ENCODE measurements at regions of chr11 and their contacts with region 1.

Region 1: DNA sequence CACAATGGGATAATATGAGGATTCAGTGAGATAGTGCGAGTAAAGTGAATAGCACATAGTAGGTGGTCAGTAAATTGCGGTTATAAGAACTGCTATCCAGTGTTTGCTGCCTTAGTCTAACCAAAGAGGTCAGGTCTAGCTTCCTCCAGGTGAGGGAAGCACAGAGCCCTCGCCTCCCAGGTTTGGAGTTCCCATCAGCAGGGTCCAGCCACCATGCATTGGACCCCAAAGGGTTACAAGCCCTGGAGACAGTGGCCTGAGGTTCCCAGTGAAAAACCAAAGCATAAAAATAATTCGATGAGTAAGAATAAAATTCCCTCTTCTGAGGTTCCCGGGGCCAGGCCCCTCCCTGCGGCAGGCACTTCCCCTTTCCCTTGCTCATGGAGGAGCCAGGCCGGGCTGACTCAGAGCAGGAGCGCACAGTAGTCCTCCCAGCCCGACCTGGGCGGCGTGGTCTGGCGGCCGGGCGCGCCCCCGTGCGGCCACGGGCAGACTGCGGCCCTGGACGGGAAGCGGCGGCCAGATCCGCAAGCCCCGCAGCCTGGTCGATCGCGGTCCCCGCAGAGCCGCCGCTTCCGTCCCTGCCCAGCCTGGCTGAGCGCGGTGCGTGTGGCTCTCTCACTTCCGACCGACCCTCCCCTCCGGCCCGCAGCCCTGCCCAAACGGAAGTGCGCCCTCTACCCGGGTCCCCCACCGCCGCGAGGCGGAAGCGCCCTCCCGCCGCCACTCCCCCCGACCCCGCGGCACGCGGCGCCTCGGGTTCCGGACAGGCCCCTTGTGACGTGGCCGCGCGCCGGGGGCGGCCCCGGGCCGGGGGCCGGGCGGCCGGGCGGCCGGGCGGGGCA is at the start of gene SLC39A13:
- DNase-seq: peak; percentile 91
- H3K4me3 Mint-ChIP-seq: peak within 1 kb of the TSS; percentile 92
- H3K27ac Mint-ChIP-seq: peak within 1 kb of the TSS; percentile 92
- H3K4me1 Mint-ChIP-seq: peaks cover 25% of the 10 kb centered on the region
- H3K27me3 Mint-ChIP-seq: no peaks in the 10 kb centered on the region
- total RNA-seq, gene SLC39A13: 9.2 TPM

Region 2: GRCh38 chr11:46936138-46937110 is 471.5 kb before region 1 on chr11 and contains the start of gene CSTPP1:
- CTCF ChIA-PET with region 1: no interaction called
- intact Hi-C with region 1: loop called (anchors 5 kb)
- DNase-seq: peak; percentile 97
- H3K4me3 Mint-ChIP-seq: peak within 1 kb of the TSS; percentile 98
- H3K27ac Mint-ChIP-seq: peak within 1 kb of the TSS; percentile 88
- H3K4me1 Mint-ChIP-seq: peaks cover 18% of the 10 kb centered on the region
- H3K27me3 Mint-ChIP-seq: no peaks in the 10 kb centered on the region
- total RNA-seq, gene CSTPP1: 14.0 TPM

Region 3: DNA sequence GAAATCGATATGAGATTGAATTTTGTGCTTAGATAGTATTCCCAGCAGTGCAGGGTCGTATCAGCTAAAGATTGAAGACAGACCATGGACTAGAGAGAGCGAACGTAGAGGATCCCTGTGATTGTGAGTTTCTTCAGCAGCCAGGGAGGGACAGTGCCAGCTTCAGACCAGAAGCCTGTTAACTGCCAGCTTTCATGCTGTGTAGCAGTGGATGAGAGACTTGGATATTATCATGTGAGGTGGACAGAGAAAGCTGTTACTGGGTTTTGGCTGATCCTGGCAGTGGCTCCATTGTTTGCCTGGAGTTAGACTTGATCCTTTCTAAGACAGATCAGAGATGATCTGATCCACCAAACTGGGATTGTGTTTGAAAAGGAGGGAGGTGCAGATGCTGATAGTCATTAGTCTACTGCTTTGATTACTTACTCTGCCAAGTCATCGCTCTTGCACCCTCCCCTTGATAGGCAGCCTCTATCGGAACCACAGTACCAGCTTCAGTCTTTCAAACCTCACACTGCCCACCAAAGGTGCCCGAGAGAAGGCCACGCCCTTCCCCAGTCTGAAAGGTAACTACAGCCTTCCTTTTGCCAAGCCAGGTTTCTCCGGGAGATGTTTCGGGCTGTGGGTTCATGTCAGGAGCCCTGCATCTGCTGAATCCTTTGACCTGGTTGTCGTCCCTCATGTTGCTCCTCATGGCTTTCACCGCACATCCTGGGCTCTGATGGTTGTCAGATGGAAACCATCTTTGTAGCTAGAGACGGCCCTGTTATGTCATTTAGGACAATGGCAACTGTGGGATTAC is 121.8 kb before region 1 on chr11:
- CTCF ChIA-PET with region 1: no interaction called
- intact Hi-C with region 1: no loop called
- DNase-seq: no peak
- H3K4me3 Mint-ChIP-seq: no peak overlapping the region
- H3K27ac Mint-ChIP-seq: no peak overlapping the region
- H3K4me1 Mint-ChIP-seq: no peaks in the 10 kb centered on the region
- H3K27me3 Mint-ChIP-seq: no peaks in the 10 kb centered on the region

Region 4: GRCh38 chr11:47394322-47395222 is 13.4 kb before region 1 on chr11:
- CTCF ChIA-PET with region 1: interaction called, 5 read pairs
- intact Hi-C with region 1: loop called (anchors 1 kb)
- DNase-seq: peak; percentile 75
- H3K4me3 Mint-ChIP-seq: peak overlapping the region; percentile 56
- H3K27ac Mint-ChIP-seq: peak overlapping the region; percentile 88
- H3K4me1 Mint-ChIP-seq: peaks cover 37% of the 10 kb centered on the region
- H3K27me3 Mint-ChIP-seq: no peaks in the 10 kb centered on the region

Region 5: DNA sequence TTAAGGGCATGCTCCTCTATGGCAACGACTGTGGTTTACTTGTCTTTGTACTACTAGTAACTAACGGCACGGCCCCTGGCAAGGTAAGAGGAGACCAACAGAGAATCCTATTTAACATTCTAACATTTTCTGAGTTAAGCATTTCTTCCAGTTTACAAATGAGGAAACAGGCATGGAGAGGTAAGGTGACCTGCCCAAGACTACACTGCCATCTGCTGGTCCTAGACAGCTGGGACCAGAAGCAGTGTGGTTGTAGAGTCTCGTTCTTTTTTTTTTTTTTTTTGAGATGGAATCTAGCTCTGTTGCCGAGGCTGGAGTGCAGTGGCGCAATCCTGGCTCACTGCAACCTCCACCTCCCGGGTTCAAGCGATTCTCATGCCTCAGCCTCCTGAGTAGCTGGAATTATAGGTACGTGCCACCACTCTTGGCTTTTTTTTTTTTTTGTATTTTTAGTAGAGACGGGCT is 46.2 kb after region 1 on chr11:
- CTCF ChIA-PET with region 1: no interaction called
- intact Hi-C with region 1: loop called (anchors 2 kb)
- DNase-seq: peak; percentile 85
- H3K4me3 Mint-ChIP-seq: no peak overlapping the region
- H3K27ac Mint-ChIP-seq: no peak overlapping the region
- H3K4me1 Mint-ChIP-seq: peaks cover 2% of the 10 kb centered on the region
- H3K27me3 Mint-ChIP-seq: no peaks in the 10 kb centered on the region

Region 6: DNA sequence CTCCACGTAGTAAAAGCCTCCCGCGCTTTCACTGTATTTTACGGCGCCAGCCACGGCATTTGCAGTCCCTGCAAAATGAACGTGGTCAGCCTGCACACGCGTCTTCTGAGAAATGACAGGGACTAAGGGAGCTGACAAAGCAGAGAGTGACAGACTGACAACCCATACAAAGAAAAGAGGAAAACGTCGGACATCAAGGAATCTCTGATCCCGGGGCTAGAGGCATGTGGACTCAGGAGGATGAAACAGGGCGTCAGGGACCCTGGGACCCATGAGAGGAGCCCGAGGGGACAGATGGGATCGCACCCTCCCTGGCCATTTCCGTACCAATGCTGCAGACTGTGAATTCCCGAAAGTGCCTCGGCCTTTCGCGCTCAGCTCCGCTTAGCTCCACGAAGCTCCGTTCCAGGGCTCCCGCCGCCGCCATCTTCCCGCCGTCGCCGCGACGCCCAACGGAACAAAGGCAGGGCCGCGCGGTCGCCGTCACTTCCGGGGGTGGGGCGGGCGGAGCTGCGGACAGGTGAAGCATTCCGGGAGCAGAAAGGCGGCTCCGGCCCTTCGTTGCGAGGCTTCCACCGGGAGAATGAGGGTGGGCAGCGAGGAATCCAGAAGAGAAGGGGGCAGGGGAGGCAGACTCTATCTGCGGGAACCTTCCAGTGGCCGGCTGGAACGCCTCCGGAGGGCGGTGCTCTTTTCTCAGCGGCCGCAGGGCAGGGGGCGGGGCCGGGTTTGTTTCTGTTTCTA is 440.1 kb after region 1 on chr11 and contains the start of gene NUP160:
- CTCF ChIA-PET with region 1: no interaction called
- intact Hi-C with region 1: loop called (anchors 2 kb)
- DNase-seq: peak; percentile 92
- H3K4me3 Mint-ChIP-seq: peak within 1 kb of the TSS; percentile 93
- H3K27ac Mint-ChIP-seq: peak within 1 kb of the TSS; percentile 92
- H3K4me1 Mint-ChIP-seq: peaks cover 47% of the 10 kb centered on the region
- H3K27me3 Mint-ChIP-seq: no peaks in the 10 kb centered on the region
- total RNA-seq, gene NUP160: 64.7 to 64.8 TPM

Measured in activated naive CD4-positive, alpha-beta T cell treated with anti-CD3 and anti-CD28 coated beads for 36 hours (primary cell).